ENCODE measurements at regions of chr14 and their contacts with region 1.

Region 1: DNA sequence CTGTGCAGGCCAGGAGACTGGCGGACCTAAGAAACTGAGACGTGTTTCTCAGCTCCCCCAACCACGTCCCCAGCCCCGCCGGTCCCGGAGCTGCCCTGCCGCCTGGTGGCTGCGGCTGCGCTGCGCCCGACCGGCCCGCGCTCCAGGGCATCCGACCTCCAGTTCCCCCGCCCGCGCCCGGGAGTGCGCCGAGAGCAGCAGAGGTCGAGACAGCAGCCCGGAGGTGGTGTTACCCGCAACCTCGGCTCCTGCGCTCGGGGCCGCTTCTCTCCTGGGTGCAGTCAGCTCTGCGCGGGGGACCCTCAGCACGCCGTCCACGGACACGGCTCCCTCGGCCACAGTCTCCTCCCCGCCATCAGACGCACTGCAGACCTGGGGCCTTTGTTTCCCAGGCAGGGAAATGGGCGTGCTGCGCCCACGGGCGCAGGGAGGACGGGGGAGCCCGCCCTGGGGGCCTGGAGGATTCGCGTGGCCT is 21.6 kb upstream of the GPR132 start:
- DNase-seq: peak; percentile 93
- H3K4me3 Mint-ChIP-seq: peak overlapping the region; percentile 76
- H3K27ac Mint-ChIP-seq: peak overlapping the region; percentile 63
- H3K4me1 Mint-ChIP-seq: peaks cover 8% of the 10 kb centered on the region
- H3K27me3 Mint-ChIP-seq: no peaks in the 10 kb centered on the region

Region 2: GRCh38 chr14:104708606-104709268 is 378.1 kb before region 1 on chr14:
- CTCF ChIA-PET with region 1: no interaction called
- intact Hi-C with region 1: no loop called
- DNase-seq: peak; percentile 80
- H3K4me3 Mint-ChIP-seq: no peak overlapping the region
- H3K27ac Mint-ChIP-seq: no peak overlapping the region
- H3K4me1 Mint-ChIP-seq: peaks cover 2% of the 10 kb centered on the region
- H3K27me3 Mint-ChIP-seq: no peaks in the 10 kb centered on the region

Region 3: GRCh38 chr14:104786091-104786586 is 300.7 kb before region 1 on chr14:
- CTCF ChIA-PET with region 1: no interaction called
- intact Hi-C with region 1: no loop called
- DNase-seq: no peak
- H3K4me3 Mint-ChIP-seq: no peak overlapping the region
- H3K27ac Mint-ChIP-seq: no peak overlapping the region
- H3K4me1 Mint-ChIP-seq: peaks cover 15% of the 10 kb centered on the region
- H3K27me3 Mint-ChIP-seq: no peaks in the 10 kb centered on the region

Region 4: GRCh38 chr14:105020815-105021655 is 65.8 kb before region 1 on chr14 and contains the start of gene CDCA4:
- CTCF ChIA-PET with region 1: interaction called, 3 read pairs
- intact Hi-C with region 1: loop called (anchors 5 kb)
- DNase-seq: peak; percentile 98
- H3K4me3 Mint-ChIP-seq: peak within 1 kb of the TSS; percentile 98
- H3K27ac Mint-ChIP-seq: peak within 1 kb of the TSS; percentile 87
- H3K4me1 Mint-ChIP-seq: peaks cover 71% of the 10 kb centered on the region
- H3K27me3 Mint-ChIP-seq: no peaks in the 10 kb centered on the region
- total RNA-seq, gene CDCA4: 59.6 to 60.4 TPM

Region 5: GRCh38 chr14:105059035-105059924 is 27.6 kb before region 1 on chr14:
- CTCF ChIA-PET with region 1: interaction called, 53 read pairs
- intact Hi-C with region 1: loop called (anchors 1 kb)
- DNase-seq: peak; percentile 87
- H3K4me3 Mint-ChIP-seq: peak overlapping the region; percentile 28
- H3K27ac Mint-ChIP-seq: peak overlapping the region; percentile 94
- H3K4me1 Mint-ChIP-seq: peaks cover 57% of the 10 kb centered on the region
- H3K27me3 Mint-ChIP-seq: no peaks in the 10 kb centered on the region

Region 6: DNA sequence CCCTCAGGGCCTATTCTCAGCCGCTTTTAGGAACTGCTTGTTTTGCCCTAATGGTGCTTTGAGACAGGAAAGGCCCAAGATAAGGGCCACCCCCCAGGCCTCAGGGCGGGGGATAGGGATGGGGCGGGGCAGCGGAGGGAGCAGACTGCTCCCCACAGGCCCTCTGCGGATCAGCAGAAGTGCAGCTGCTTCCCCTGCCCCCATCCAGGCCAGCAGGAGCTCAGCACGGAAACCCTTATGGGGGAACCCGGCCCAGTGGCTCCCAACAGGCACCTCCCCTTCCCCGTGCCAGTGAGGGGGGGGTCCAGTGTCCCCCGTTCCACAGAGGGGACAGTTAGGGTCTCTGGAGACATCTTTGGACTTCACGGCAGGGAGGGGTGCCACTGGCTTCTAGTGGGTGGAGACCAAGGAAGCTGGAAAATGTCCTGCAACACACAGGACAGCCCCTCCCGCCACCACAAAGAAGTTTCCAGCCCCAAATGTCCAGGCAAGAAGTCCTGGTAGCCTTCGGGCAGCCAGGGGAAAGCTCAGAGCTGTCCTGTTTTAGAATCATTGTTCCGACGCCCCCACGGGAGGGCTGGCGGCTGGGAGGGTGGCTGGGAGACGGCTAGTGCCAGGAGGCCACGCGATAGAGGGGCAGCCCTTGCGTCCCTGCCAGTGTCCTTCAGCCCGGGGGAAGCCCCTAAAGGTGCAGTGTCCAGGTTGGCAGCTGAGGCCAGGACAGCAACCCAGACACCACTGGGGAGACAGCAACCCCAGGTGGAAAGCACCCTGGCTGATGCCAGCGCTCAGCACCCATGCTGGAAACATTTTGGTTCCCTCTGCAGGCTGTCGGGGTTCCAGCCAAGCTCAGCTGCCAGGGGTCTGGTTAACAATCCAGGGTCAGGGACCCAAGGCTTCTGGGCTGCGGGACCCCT is 11.2 kb before region 1 on chr14:
- CTCF ChIA-PET with region 1: interaction called, 23 read pairs
- intact Hi-C with region 1: loop called (anchors 1 kb)
- DNase-seq: peak; percentile 79
- H3K4me3 Mint-ChIP-seq: no peak overlapping the region
- H3K27ac Mint-ChIP-seq: peak overlapping the region; percentile 30
- H3K4me1 Mint-ChIP-seq: peaks cover 32% of the 10 kb centered on the region
- H3K27me3 Mint-ChIP-seq: no peaks in the 10 kb centered on the region

Region 7: GRCh38 chr14:105180592-105181548 is 94.0 kb after region 1 on chr14 and contains the start of gene NUDT14:
- CTCF ChIA-PET with region 1: interaction called, 9 read pairs
- intact Hi-C with region 1: loop called (anchors 5 kb)
- DNase-seq: peak; percentile 86
- H3K4me3 Mint-ChIP-seq: peak within 1 kb of the TSS; percentile 72
- H3K27ac Mint-ChIP-seq: peak within 1 kb of the TSS; percentile 36
- H3K4me1 Mint-ChIP-seq: peaks cover 4% of the 10 kb centered on the region
- H3K27me3 Mint-ChIP-seq: no peaks in the 10 kb centered on the region
- total RNA-seq, gene NUDT14: 12.0 to 15.8 TPM

Region 8: GRCh38 chr14:105281371-105282097 is 194.7 kb after region 1 on chr14:
- CTCF ChIA-PET with region 1: no interaction called
- intact Hi-C with region 1: loop called (anchors 1 kb)
- DNase-seq: peak; percentile 40
- H3K4me3 Mint-ChIP-seq: no peak overlapping the region
- H3K27ac Mint-ChIP-seq: no peak overlapping the region
- H3K4me1 Mint-ChIP-seq: peaks cover 20% of the 10 kb centered on the region
- H3K27me3 Mint-ChIP-seq: no peaks in the 10 kb centered on the region